AG04449 (cell line): ENCODE measurements at regions of chr6 and their contacts with region 1.

Region 1: DNA sequence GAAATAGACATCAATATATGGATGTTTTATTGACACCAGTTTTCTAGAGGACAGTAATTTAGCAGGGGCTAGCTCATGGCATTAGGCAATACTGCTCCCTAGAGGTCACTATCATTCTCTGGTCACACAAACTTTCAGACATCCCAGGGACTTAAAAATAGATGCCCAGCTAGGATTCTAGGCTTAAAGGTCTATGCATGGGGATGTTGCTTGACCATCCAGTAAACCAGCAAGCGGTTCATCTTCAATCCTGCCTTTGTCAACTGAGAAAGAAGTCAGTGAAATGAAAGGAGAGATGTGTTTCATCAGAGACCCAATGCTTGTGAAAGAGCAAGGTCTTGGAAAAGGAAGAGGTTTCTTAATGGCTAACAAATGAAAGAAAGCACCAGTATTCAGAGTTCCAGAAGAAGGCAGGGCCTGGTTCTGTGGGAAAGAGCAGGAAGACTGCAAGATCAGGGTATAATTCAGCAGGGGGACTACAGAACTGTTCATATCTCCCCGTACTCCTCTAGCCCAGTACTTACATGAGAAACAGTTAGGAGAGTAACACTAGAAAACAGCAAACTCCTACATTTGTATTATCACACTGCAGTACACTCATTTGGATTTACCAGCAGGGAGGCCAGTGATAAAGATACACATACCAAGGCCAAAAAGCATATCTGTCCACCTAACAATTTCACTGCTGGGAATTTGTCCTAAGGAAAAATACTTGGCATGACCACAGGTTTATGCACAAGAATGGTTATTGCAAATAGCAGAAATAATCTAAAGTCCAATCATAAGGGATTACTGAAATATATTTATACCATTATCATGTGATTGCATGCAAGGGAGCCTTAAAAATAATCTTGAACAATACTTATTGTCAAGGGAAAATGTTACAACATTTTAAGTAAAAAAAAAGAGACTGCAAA is 151.4 kb upstream of the LAMA2 start:
- DNase-seq: no peak
- H3K4me3 ChIP-seq: no peak overlapping the region
- CTCF ChIP-seq: peak; percentile 64

Region 2: GRCh38 chr6:127737009-127737486 is 994.5 kb before region 1 on chr6:
- CTCF ChIA-PET with region 1: interaction called, 37 read pairs
- POLR2A ChIA-PET with region 1: no interaction called
- DNase-seq: peak; percentile 24
- H3K4me3 ChIP-seq: no peak overlapping the region
- CTCF ChIP-seq: peak; percentile 54

Region 3: GRCh38 chr6:128379577-128379976 is 351.9 kb before region 1 on chr6:
- CTCF ChIA-PET with region 1: no interaction called
- POLR2A ChIA-PET with region 1: no interaction called
- DNase-seq: no peak
- H3K4me3 ChIP-seq: no peak overlapping the region
- CTCF ChIP-seq: no peak

Region 4: DNA sequence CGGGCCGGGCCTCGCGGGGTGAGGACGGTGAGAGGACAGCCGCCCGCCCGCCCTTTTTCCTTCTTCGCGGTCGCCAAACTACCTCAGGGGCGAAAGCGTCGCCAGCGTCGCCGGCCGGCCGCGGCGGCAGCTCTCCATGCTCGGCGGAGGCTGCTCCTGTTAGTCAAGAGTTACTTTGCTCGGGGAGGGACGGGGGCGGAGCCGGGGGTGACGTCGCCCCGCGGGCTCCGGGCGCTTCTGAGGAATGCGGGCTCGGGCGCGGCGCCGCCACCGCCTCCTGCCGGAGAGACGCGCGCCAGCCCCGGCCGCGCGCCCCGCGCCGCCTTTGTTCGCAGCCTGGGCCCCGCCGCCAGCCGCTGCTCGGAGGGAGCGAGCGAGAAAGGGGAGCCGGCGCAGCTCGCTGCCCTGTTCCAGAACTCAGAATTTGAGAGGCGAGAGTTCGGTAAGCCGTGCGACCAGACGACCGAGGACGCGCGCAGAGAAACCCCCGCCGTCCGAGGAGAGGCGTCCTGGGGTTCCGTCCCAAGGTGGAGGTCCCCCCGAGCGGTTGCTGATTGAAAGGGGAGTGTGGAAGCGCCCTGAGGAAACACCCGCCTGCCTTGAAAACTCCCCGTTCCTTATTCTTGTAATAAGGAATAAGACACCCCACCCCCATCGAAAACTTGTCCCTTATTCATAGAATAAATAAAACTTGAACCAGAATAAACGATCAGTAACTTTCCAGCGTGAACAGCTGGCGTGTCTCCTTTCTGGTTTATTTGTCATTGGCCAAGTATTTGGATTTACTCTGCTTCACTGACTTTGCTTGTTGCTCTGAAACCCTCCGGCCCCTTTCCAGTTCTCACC is 210.8 kb before region 1 on chr6 and contains the start of gene PTPRK:
- CTCF ChIA-PET with region 1: interaction called, 15 read pairs
- POLR2A ChIA-PET with region 1: interaction called, 3 read pairs
- DNase-seq: no peak
- H3K4me3 ChIP-seq: peak within 1 kb of the TSS; percentile 90
- CTCF ChIP-seq: peak; percentile 28

Region 5: GRCh38 chr6:128630182-128630581 is 101.3 kb before region 1 on chr6:
- CTCF ChIA-PET with region 1: no interaction called
- POLR2A ChIA-PET with region 1: no interaction called
- DNase-seq: no peak
- H3K4me3 ChIP-seq: no peak overlapping the region
- CTCF ChIP-seq: no peak

Region 6: GRCh38 chr6:128803911-128804310 is 72.4 kb after region 1 on chr6:
- CTCF ChIA-PET with region 1: no interaction called
- POLR2A ChIA-PET with region 1: no interaction called
- DNase-seq: peak; percentile 4
- H3K4me3 ChIP-seq: no peak overlapping the region
- CTCF ChIP-seq: no peak

Region 7: GRCh38 chr6:129094147-129094546 is 362.6 kb after region 1 on chr6:
- CTCF ChIA-PET with region 1: no interaction called
- POLR2A ChIA-PET with region 1: no interaction called
- DNase-seq: no peak
- H3K4me3 ChIP-seq: no peak overlapping the region
- CTCF ChIP-seq: no peak